Dendritic cell treated with granulocyte-macrophage colony-stimulating factor and Interleukin-4, amounts not matched to agents 40 ng/mL and 50 ng/mL, for 4 days (primary cell): ENCODE measurements at regions of chr1 and their contacts with region 1.

Region 1: DNA sequence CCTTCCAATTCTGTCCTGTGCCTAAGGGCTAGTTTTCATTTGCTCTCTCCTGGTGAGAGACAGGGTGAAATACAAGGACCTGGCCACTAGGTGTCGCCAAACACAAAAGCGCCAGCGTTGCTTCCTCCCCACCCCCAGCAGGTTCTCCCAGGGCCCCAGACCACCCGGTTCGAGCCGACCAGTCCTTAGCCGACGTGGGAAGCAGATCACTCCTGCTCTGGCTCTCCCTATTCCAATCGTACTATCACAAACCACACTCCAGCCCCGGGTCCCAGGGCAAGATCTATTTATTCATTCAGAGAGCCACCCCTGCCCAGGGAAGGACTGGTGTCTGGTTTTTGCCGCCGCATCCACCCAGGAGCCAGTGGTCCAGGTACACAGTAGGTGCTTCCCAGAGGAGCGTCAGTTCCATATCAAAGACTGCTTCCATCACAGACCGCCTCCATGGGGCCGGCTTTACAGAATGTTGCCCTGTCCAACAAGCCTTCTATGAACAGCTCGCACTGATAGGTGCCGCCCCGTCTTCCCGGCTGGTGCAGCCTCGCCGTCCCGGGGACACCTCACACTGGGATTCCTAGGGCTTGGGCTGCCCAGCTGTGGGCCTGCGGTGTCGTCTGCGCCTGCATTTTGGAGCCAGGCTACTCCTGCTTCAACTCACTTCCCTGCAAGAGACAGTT is 35.0 kb downstream of the CTNNBIP1 start:
- H3K4me3 Mint-ChIP-seq: no peak overlapping the region
- H3K27ac Mint-ChIP-seq: peak overlapping the region; percentile 1
- H3K4me1 Mint-ChIP-seq: peaks cover 18% of the 10 kb centered on the region
- H3K27me3 Mint-ChIP-seq: no peaks in the 10 kb centered on the region

Region 2: DNA sequence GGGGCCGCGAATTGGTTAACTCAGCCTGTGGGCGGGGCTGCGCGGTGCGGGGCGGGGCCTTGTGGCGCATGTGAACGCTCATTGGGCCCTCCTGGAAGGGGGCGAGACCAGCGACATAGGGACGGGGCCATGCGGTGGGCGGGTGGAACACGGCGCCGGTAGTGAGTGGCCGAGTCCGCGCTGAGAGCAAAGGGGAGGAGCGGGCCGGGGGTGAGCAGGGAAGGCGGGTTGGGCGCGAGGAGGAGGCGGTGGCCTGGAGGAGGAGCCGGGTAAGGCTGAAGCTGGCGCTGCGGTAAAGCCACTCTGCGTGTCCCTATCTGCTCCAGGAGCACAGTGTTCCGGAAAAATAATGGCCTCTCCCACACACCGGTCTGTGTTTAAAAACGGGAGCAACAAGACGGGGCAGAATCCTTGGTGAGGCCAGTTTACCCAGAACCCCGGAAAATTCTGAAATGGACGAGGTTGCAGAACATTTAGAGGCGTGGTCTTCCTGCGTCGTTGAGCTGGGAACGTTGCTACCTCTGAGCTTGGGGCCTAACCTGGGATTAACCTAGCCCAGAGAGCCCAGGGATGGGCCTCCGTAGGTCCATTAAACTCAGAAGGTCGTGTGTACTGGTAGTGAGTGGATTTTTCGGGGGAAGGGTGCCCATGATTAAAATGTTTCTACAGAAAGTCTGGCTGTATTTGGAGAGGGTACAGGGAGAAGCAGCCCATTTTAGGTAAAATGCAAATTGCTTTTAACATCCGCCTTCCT is 35.5 kb after region 1 on chr1:
- intact Hi-C with region 1: loop called (anchors 2 kb)
- H3K4me3 Mint-ChIP-seq: peak overlapping the region; percentile 90
- H3K27ac Mint-ChIP-seq: peak overlapping the region; percentile 98
- H3K4me1 Mint-ChIP-seq: peaks cover 55% of the 10 kb centered on the region
- H3K27me3 Mint-ChIP-seq: no peaks in the 10 kb centered on the region

Region 3: GRCh38 chr1:9942939-9943788 is 68.1 kb after region 1 on chr1 and contains the starts of genes LZIC and NMNAT1:
- intact Hi-C with region 1: loop called (anchors 2 kb)
- H3K4me3 Mint-ChIP-seq: peak within 1 kb of the TSS; percentile 87
- H3K27ac Mint-ChIP-seq: peak within 1 kb of the TSS; percentile 97
- H3K4me1 Mint-ChIP-seq: peaks cover 22% of the 10 kb centered on the region
- H3K27me3 Mint-ChIP-seq: no peaks in the 10 kb centered on the region